ENCODE measurements at regions of chr18 and their contacts with region 1.

Region 1: GRCh38 chr18:58796220-58796619 is 68.5 kb upstream of the ZNF532 start:
- DNase-seq: no peak

Region 2: GRCh38 chr18:58813561-58814225 is 17.5 kb after region 1 on chr18:
- CTCF ChIA-PET with region 1: no interaction called
- POLR2A ChIA-PET with region 1: no interaction called
- DNase-seq: no peak

Region 3: DNA sequence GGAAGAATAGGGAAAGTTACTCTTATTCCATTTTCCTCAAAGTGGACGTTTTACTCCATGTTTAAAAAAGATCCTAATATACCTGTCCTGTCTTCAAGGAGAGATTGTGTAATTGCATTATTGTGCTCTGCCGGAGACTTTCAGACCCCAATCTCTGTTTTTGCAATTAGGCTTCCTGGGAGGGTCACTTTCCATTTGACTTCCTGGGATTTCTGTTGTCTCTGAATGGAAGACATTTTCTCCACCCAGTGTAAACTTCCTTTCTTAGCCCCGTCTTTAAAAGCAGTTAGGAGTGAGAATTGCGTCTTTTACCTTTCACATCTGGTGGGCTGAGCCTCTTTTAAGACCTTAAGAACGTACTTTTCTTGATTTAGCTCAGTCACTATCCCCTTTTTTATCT is 131.4 kb after region 1 on chr18:
- CTCF ChIA-PET with region 1: no interaction called
- POLR2A ChIA-PET with region 1: no interaction called
- DNase-seq: no peak

Region 4: DNA sequence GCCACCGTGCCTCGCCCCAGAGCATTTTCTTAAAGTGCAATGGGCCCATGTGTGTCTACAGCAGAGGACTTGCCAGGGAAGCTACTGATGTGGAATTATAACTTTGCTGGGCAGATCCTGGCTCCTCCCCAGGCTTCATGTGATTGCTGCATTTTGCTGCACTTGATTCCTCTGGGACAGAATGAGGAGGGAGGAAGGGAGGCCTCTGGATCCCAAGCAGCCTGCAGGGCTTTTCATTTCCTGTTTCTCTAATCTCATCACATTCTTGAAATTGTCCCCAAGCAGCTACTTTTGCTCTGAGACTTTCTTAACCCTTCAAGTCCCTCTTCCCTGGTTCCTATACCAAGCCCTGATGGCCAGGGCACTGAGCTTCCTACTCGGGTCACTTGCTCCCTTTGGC is 209.0 kb after region 1 on chr18:
- CTCF ChIA-PET with region 1: interaction called, 11 read pairs
- POLR2A ChIA-PET with region 1: no interaction called
- DNase-seq: no peak